ENCODE measurements at regions of chr14 and their contacts with region 1.

Region 1: GRCh38 chr14:50038398-50039119 is 77.8 kb downstream of the VCPKMT start:
- DNase-seq: peak; percentile 87
- H3K4me3 Mint-ChIP-seq: peak overlapping the region; percentile 81
- H3K27ac Mint-ChIP-seq: peak overlapping the region; percentile 98
- H3K4me1 Mint-ChIP-seq: peaks cover 58% of the 10 kb centered on the region
- H3K27me3 Mint-ChIP-seq: no peaks in the 10 kb centered on the region

Region 2: GRCh38 chr14:49867831-49868723 is 170.5 kb before region 1 on chr14:
- intact Hi-C with region 1: loop called (anchors 1 kb)
- DNase-seq: peak; percentile 98
- H3K4me3 Mint-ChIP-seq: peak overlapping the region; percentile 99
- H3K27ac Mint-ChIP-seq: peak overlapping the region; percentile 97
- H3K4me1 Mint-ChIP-seq: peaks cover 23% of the 10 kb centered on the region
- H3K27me3 Mint-ChIP-seq: no peaks in the 10 kb centered on the region

Region 3: DNA sequence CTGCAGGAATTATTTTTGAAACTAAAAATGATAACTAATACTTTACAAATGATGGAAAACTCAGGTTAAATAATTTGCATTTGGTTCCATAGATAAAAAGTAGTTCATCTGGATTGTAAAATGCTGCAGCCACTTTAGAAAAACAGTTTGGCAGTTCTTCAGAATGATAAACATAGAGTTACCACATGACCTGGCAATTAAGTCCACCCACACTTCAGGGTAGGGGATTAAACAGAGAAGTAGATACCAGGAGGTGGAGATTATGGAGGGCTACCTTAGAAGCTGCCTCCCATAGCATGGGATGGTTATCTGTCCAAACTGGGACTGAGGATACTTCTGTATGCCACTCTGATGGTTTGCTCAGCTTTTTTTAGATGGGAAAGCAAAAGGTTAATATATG is 123.5 kb before region 1 on chr14:
- intact Hi-C with region 1: no loop called
- DNase-seq: no peak
- H3K4me3 Mint-ChIP-seq: no peak overlapping the region
- H3K27ac Mint-ChIP-seq: no peak overlapping the region
- H3K4me1 Mint-ChIP-seq: peaks cover 11% of the 10 kb centered on the region
- H3K27me3 Mint-ChIP-seq: no peaks in the 10 kb centered on the region

Region 4: DNA sequence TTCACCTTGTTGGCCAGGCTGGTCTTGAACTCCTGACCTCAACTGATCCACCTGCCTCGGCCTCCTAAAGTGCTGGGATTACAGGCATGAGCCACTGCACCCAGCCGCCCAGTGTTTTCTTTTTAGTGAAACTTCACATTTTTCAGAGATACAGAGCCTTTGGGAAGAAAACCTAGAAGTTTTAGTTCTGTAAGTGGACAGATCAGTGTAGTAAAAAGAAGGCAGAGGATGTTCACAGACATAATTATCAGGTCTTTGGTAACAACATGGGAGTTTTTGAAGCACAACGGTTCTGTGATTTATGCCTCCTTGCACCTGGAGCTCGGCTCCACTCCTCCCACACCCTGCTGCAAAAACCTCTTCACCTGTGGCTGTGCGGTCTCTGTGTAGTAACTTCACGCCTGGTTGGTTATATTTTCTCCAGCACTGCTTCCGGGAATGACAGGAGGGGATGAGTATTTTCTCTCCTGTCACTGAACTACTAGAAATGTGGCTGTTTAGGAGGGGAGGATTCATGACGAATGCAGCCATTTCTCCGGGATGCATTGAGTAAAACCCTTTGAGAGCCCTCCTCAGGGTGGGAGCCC is 78.6 kb before region 1 on chr14:
- intact Hi-C with region 1: loop called (anchors 1 kb)
- DNase-seq: peak; percentile 74
- H3K4me3 Mint-ChIP-seq: peak overlapping the region; percentile 39
- H3K27ac Mint-ChIP-seq: peak overlapping the region; percentile 18
- H3K4me1 Mint-ChIP-seq: peaks cover 39% of the 10 kb centered on the region
- H3K27me3 Mint-ChIP-seq: no peaks in the 10 kb centered on the region

Region 5: GRCh38 chr14:49982501-49982951 is 56.0 kb before region 1 on chr14:
- intact Hi-C with region 1: loop called (anchors 1 kb)
- DNase-seq: no peak
- H3K4me3 Mint-ChIP-seq: no peak overlapping the region
- H3K27ac Mint-ChIP-seq: peak overlapping the region; percentile 78
- H3K4me1 Mint-ChIP-seq: peaks cover 59% of the 10 kb centered on the region
- H3K27me3 Mint-ChIP-seq: no peaks in the 10 kb centered on the region

Region 6: DNA sequence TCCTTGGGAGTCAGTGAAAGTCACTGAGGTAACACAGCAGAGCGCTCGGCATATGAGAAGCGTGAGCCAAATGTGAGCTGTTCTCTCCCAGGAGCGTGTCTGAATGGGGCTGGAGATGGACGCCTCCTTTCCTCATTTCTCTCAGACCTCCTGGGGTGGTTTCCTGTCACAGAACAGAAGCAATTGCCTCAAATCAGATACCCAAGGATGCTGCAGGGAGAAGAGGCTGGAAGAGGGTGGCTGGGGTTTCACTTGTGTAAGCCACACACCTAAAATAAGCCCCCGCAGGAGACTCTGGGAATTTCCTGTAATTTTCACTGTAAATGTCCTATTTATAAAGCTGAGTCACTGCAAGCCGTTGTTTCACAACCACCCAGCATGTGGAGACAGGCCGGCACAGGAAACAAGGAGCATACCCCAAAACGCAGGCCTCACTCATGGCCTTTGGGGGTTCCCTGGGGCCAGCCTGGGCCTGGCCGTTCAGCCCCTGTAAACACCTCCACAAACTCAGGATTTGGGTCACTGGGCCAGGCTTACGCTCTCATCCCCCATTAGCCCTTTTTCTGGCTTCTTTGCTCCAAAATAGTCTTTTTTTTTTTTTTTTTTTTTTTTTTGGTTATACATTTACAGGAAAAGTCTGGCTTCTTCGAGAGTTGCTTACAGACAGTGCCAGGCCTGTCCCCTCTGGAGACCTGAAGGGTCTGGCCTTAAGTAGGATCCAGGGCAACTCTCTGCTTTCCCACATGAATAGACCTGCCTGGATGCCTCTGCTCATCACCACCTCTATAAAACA is 22.5 kb after region 1 on chr14:
- intact Hi-C with region 1: loop called (anchors 1 kb)
- DNase-seq: peak; percentile 83
- H3K4me3 Mint-ChIP-seq: peak overlapping the region; percentile 85
- H3K27ac Mint-ChIP-seq: peak overlapping the region; percentile 98
- H3K4me1 Mint-ChIP-seq: peaks cover 76% of the 10 kb centered on the region
- H3K27me3 Mint-ChIP-seq: no peaks in the 10 kb centered on the region

Region 7: GRCh38 chr14:50109342-50109741 is 70.8 kb after region 1 on chr14:
- intact Hi-C with region 1: loop called (anchors 1 kb)
- DNase-seq: no peak
- H3K4me3 Mint-ChIP-seq: no peak overlapping the region
- H3K27ac Mint-ChIP-seq: no peak overlapping the region
- H3K4me1 Mint-ChIP-seq: peaks cover 20% of the 10 kb centered on the region
- H3K27me3 Mint-ChIP-seq: no peaks in the 10 kb centered on the region

Region 8: GRCh38 chr14:50321009-50321660 is 282.6 kb after region 1 on chr14:
- intact Hi-C with region 1: loop called (anchors 5 kb)
- DNase-seq: peak; percentile 91
- H3K4me3 Mint-ChIP-seq: no peak overlapping the region
- H3K27ac Mint-ChIP-seq: no peak overlapping the region
- H3K4me1 Mint-ChIP-seq: peaks cover 22% of the 10 kb centered on the region
- H3K27me3 Mint-ChIP-seq: no peaks in the 10 kb centered on the region